HepG2 (cell line): ENCODE measurements at regions of chr9 and their contacts with region 1.

Region 1: GRCh38 chr9:93962561-93963440 is 7.6 kb upstream of the BARX1 start:
- DNase-seq: peak; percentile 66
- ATAC-seq: peak; percentile 73
- H3K4me3 ChIP-seq: no peak overlapping the region
- H3K27ac ChIP-seq: no peak overlapping the region
- H3K4me1 ChIP-seq: no peaks in the 10 kb centered on the region
- H3K27me3 ChIP-seq: peaks cover 12 to 36% of the 10 kb centered on the region in 2 experiments
- CTCF ChIP-seq: peak; percentile 88
- EP300 ChIP-seq: no peak
- POLR2A ChIP-seq: no peak
- RAD21 ChIP-seq: peak; percentile 75

Region 2: DNA sequence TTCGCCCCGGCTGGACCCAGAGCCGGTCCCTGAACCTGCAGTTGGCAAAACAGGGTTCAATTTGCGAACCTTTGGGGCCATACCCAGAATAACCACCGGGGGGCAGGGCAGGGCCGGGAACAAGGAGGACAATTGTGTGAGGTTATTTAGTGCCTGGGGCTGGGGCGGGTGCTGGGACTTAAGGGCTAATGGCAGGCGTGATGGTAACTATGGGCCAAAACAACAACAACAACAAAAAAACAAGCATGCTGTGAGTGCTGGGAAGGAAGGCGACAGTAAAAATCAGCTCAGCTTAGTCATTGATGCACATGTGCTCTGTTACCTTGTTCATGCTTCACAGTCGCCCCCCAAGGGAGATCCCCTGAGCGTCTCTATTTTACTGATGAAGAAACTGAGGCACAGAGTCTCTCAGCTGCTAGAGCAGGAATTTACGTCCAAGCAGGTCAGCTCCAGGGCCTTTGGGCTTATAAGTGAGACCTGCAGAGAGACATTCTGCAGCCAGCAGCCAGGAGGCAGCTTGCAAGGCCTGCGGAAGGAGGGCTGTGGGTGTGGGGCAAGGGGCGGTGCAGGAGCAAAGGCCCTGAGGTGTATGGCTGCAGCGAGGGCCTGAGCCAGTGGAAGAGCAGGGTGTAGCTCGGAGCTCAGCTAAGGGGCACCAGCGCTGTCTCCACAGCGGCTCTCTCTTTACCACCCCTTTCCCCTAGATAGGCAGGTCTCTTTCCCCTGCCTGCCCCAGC is 280.4 kb before region 1 on chr9:
- CTCF ChIA-PET with region 1: interaction called, 19 read pairs
- POLR2A ChIA-PET with region 1: no interaction called
- in situ Hi-C with region 1: loop called (anchors 5 kb)
- intact Hi-C with region 1: loop called (anchors 1 kb)
- DNase-seq: peak; percentile 28
- ATAC-seq: peak; percentile 73
- H3K4me3 ChIP-seq: peak overlapping the region in 1 of 3 experiments; percentile 62; a peak in 1 of 6 replicates
- H3K27ac ChIP-seq: no peak overlapping the region
- H3K4me1 ChIP-seq: peaks cover 19% of the 10 kb centered on the region
- H3K27me3 ChIP-seq: 0 out of 5 replicates have a peak, but pooled peaks cover 0 to 1% of the 10 kb centered on the region in 2 experiments
- CTCF ChIP-seq: peak; percentile 90
- EP300 ChIP-seq: no peak
- POLR2A ChIP-seq: no peak
- RAD21 ChIP-seq: peak; percentile 67

Region 3: DNA sequence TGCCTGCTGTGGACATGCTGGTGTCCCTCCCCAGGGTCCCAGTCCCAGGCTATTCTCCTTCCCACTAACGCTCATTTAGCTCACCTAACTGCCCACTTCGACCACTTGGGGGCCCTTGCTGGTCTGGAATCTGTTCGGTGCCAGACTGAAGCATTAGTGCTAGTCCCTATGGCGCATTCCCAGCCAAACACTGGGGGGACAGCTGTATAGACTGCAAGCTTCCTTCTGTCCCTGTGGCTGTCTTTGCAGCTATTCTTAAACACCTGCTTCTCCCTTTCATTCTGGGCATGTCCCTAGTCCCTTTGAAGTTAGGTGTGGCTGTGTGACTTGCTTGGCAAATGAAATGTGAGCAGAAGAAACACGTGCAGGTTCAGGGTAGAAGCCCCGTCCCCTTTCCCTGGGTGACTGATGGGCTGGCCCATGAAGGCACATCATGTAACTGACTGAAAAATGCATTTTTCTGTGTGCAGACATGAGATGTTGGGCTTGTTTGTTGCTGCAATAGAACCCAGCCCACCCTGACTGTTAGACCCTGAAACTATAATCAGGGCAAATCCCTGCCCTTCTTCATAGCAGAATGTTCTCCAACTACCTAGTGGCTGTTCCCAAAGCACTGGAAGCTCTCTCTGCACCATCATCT is 142.0 kb before region 1 on chr9:
- CTCF ChIA-PET with region 1: interaction called, 6 read pairs
- POLR2A ChIA-PET with region 1: no interaction called
- in situ Hi-C with region 1: loop called (anchors 5 kb)
- intact Hi-C with region 1: loop called (anchors 2 kb)
- DNase-seq: peak; percentile 37
- ATAC-seq: peak; percentile 94
- H3K4me3 ChIP-seq: no peak overlapping the region
- H3K27ac ChIP-seq: no peak overlapping the region
- H3K4me1 ChIP-seq: no peaks in the 10 kb centered on the region
- H3K27me3 ChIP-seq: peaks cover under 1 to 2% of the 10 kb centered on the region in 2 experiments; a peak in 2 of 5 replicates
- CTCF ChIP-seq: peak; percentile 59
- EP300 ChIP-seq: no peak
- POLR2A ChIP-seq: no peak
- RAD21 ChIP-seq: no peak

Region 4: GRCh38 chr9:93827545-93828330 is 135.1 kb before region 1 on chr9:
- CTCF ChIA-PET with region 1: interaction called, 15 read pairs
- POLR2A ChIA-PET with region 1: no interaction called
- in situ Hi-C with region 1: loop called (anchors 5 kb)
- intact Hi-C with region 1: no loop called
- DNase-seq: peak; percentile 43
- ATAC-seq: peak; percentile 99
- H3K4me3 ChIP-seq: peak overlapping the region; percentile 54 to 71 (median 56); a peak in 5 of 6 replicates
- H3K27ac ChIP-seq: no peak overlapping the region
- H3K4me1 ChIP-seq: no peaks in the 10 kb centered on the region
- H3K27me3 ChIP-seq: peaks cover 2 to 19% of the 10 kb centered on the region in 2 experiments; a peak in 4 of 5 replicates
- CTCF ChIP-seq: peak; percentile 87
- EP300 ChIP-seq: no peak; a peak in 1 of 4 replicates
- POLR2A ChIP-seq: no peak
- RAD21 ChIP-seq: peak; percentile 65

Region 5: GRCh38 chr9:93843396-93843795 is 119.4 kb before region 1 on chr9:
- CTCF ChIA-PET with region 1: no interaction called
- POLR2A ChIA-PET with region 1: no interaction called
- in situ Hi-C with region 1: no loop called
- intact Hi-C with region 1: no loop called
- DNase-seq: no peak
- ATAC-seq: no peak
- H3K4me3 ChIP-seq: no peak overlapping the region
- H3K27ac ChIP-seq: no peak overlapping the region
- H3K4me1 ChIP-seq: no peaks in the 10 kb centered on the region
- H3K27me3 ChIP-seq: no peaks in the 10 kb centered on the region
- CTCF ChIP-seq: no peak
- EP300 ChIP-seq: no peak
- POLR2A ChIP-seq: no peak
- RAD21 ChIP-seq: no peak

Region 6: DNA sequence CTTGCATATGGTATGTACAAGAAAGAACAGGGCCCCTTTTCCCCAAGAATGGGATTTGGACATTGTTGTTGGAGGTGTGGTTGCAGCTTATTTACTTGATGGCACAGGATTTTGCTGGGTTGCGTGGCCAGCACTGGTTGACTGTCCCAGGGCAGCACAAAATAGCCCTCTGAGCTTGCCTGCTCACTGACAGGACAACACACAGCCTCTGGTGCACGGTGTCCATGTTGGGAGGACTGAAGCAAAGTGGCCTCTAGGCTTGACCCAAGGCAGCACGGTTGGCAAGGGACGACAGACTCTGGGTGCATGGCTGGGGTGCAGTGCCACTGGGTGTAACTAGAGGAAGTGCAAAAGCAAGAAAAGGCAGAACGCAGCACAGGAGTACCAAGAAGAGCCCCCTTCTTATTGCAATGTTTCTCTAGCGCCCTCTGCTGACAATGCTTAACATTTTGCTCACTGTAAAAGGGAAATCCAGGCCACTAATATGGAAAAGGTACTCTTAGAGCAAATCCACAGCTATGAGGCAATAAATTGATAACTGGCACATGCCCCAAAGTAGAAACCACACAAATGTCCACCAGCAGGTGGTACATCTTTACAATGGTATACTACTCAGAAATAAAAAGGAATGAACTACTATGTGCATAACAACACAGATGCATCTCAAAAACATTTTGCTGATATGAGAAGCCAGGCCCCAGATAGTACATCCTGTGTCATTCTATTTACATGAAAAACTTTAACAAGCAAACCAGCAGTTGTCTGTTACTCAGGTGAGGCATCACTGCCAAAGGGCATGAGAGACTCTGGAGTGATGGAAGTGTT is 39.7 kb after region 1 on chr9:
- CTCF ChIA-PET with region 1: interaction called, 8 read pairs
- POLR2A ChIA-PET with region 1: no interaction called
- in situ Hi-C with region 1: no loop called
- intact Hi-C with region 1: loop called (anchors 1 kb)
- DNase-seq: peak; percentile 61
- ATAC-seq: peak; percentile 73
- H3K4me3 ChIP-seq: no peak overlapping the region
- H3K27ac ChIP-seq: no peak overlapping the region
- H3K4me1 ChIP-seq: peaks cover 10% of the 10 kb centered on the region
- H3K27me3 ChIP-seq: peaks cover 0 to 5% of the 10 kb centered on the region in 2 experiments; a peak in 1 of 5 replicates
- CTCF ChIP-seq: peak; percentile 80
- EP300 ChIP-seq: no peak
- POLR2A ChIP-seq: no peak
- RAD21 ChIP-seq: peak; percentile 58; the same call in 1 of the 2 replicates